Ovary (tissue), 10 donors: ENCODE measurements at regions of chr20 and their contacts with region 1.

Region 1: DNA sequence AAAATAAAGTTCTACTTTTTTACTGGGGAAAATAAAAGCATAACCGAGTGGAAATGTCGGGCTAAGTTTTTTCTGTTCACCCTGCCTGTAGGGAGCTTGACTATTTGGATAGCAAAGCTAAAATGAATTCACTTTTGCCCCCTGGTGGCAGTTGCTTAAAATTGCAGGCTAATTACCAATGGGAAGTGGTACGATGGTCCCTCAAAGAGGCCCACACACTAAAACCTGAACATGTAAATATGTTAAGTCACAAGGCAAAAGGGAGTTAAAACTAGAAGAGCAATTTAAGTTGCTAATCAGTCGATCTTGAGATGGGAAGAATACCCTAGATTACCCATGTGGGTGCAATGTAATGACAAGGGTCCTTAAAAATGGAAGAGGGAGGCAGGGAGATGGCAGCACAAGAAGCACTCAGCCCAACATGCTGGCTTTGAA is 916 bp upstream of the SUN5 start:
- DNase-seq: no peak
- H3K4me3 ChIP-seq: no peak overlapping the region
- H3K27ac ChIP-seq: no peak overlapping the region
- H3K4me1 ChIP-seq: no peaks in the 10 kb centered on the region
- H3K27me3 ChIP-seq: no peaks in the 10 kb centered on the region
- CTCF ChIP-seq: no peak
- EP300 ChIP-seq: no peak
- POLR2A ChIP-seq: no peak

Region 2: DNA sequence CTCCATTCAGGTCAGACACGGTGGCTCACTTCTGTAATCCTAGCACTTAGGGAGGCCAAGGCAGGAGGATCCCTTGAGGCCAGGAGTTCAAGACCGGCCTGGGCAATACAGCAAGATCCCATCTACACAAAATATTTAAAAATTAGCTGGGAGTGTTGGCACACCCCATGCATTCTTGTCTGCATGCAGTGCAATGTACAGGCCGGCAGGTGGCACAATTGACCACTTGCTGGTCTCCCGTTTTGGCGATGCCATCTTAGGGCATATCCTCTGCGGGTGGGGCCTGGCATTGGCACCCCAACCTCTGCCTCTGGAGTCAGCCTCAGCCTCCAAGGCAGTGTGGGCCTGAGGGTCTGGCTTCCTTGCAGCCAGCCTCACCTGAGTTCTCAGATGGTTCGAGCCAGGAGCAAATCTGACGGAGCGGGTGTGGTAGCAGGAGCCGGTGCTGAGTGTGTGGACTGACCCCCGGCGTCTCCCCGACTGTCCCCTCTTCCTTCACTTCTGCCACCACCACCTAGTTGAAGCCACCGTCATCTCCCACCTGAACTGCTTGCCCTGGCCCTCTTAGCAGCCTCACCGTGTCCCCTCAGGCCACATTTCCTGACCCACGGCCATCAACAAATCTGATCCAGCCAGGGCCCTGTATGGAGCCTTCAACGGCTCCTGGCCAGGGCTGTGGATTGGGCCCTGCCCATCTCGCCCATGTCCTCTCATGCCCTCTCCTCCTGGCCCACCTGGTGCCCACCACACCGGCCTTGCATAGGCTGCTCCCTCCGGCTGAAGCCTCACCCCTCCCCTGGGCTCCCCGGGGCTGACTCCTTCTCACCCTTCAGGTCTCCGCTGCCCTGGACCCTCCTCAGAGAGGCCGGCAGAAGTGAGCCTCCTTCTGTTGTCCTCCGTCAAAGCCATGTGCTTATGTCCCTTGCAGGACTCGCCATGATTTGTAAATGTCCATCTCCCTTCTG is 102.4 kb before region 1 on chr20:
- intact Hi-C with region 1: no loop called
- DNase-seq: peak in 2 of 5 donors; percentile 23 to 48
- H3K4me3 ChIP-seq: no peak overlapping the region
- H3K27ac ChIP-seq: no peak overlapping the region
- H3K4me1 ChIP-seq: no peaks in the 10 kb centered on the region
- H3K27me3 ChIP-seq: no peaks in the 10 kb centered on the region
- CTCF ChIP-seq: peak in 2 of 3 donors; percentile 14 to 32
- EP300 ChIP-seq: no peak
- POLR2A ChIP-seq: no peak

Region 3: GRCh38 chr20:33046412-33046811 is 41.3 kb after region 1 on chr20:
- intact Hi-C with region 1: no loop called
- DNase-seq: no peak
- H3K4me3 ChIP-seq: no peak overlapping the region
- H3K27ac ChIP-seq: no peak overlapping the region
- H3K4me1 ChIP-seq: no peaks in the 10 kb centered on the region
- H3K27me3 ChIP-seq: no peaks in the 10 kb centered on the region
- CTCF ChIP-seq: no peak
- EP300 ChIP-seq: no peak
- POLR2A ChIP-seq: no peak

Region 4: DNA sequence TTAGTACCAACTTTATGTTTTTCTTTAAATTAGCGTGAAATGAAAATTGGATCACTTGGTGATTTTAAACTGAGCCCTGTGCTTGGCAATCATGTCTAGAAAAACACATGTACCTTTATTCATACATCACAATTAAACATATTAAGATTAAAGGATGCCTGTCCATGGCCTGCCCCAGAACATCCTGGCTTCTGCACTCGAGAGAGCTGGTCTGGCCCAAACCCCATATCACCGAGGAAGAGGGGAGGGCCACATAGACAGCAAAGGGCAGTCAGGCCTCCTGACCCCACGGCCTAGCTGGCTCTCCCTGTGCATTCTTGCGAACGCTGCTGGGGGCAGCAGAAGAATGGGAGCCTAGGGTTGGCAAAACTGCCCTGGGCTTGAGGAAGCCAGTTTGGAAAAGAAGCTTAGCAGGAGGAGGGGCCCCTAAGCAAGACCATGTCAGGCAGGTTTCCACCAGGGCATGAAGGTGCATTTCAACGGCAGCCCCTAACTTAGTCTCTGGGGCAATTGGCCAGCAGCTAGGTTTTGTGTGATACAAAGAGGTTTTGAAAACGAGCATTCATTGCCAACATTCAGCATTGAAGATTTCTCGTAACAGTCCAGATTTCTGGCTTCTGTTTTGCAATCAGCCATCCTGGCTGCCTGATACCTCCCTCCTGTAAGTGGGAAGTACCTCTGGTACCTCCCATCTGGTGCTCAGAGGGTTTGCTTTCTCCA is 57.1 kb after region 1 on chr20:
- intact Hi-C with region 1: loop called in 1 of 4 experiments (anchors 10 kb)
- DNase-seq: no peak
- H3K4me3 ChIP-seq: no peak overlapping the region
- H3K27ac ChIP-seq: no peak overlapping the region
- H3K4me1 ChIP-seq: no peaks in the 10 kb centered on the region
- H3K27me3 ChIP-seq: no peaks in the 10 kb centered on the region
- CTCF ChIP-seq: no peak
- EP300 ChIP-seq: no peak
- POLR2A ChIP-seq: no peak